CD4-positive, alpha-beta T cell (primary cell): ENCODE measurements at regions of chr5 and their contacts with region 1.

Region 1: DNA sequence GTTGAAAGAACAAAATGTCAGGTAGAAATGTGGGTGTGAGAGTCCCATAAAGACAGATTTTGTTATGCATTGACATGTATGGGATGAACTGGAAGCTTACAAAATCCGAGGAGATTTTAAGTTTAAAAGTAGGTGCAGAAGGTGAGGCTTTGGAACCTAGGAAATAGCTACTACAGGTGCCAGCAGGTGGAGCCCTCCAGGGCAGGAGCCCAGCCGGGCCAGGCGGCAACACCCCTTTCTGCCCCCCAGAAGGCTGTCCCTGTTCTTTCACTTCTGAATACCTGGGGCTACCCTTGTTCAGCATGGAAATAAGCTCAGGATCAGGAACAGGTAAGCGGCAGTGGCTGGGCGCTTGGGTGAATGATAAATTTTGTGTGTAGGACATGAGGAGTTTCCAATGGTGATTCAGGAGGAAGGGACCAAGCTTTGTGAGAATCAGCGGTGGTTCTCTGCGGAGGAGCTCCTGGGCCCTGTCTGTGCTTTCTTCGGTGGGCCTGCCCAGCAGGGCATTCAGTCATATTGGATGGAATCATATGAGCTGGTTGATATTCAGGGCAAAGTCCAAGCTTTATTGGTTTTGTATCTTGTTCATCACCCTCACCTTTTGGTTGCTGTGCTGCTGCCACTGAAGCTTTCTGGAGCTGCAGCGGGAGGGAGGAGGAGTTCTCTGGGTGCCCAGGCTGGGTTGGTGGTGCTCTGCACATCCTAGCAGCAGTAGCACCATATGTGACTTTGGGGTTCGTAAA is 12.3 kb downstream of the PCBD2 start:
- DNase-seq: peak in 1 of 14 experiments; percentile 9
- ATAC-seq: no peak
- H3K4me3 ChIP-seq: no peak overlapping the region
- H3K4me3 Mint-ChIP-seq: no peak overlapping the region
- H3K27ac ChIP-seq: no peak overlapping the region
- H3K27ac Mint-ChIP-seq: no peak overlapping the region
- H3K4me1 ChIP-seq: no peaks in the 10 kb centered on the region
- H3K4me1 Mint-ChIP-seq: peaks cover 12% of the 10 kb centered on the region
- H3K27me3 ChIP-seq: no peaks in the 10 kb centered on the region
- H3K27me3 Mint-ChIP-seq: no peaks in the 10 kb centered on the region
- CTCF ChIP-seq: no peak

Region 2: DNA sequence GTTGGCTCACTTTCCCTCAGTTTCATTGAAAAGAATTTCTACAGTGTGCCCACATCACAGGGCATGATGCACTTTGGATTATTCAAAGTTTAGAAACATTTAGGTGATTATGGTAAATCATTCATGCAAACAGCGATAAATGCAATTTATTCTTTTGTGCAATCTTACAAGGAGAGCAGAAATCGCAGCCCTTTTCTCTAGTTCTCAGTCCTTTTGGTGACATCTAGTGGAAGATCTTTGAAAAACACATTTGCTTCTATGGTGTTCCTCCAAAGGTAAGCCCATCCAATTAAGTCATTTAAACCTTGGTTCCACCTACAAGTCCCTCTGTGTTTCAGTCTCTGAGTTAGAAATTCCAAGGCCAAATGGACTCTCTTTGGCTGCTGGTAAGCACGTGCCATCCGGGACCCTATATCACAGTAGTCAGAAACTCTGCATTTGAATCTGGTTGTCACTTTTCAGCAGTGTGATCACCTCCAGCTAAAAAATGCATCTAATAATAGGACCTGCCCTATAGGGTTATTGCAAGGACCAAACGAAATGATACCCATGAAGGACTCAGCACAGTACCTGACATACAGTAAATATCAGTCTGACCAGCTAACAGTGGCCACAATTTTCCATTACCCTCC is 415.4 kb after region 1 on chr5:
- CTCF ChIA-PET with region 1: no interaction called
- POLR2A ChIA-PET with region 1: no interaction called
- intact Hi-C with region 1: loop called in 1 of 2 experiments (anchors 5 kb)
- DNase-seq: peak in 3 of 14 experiments; percentile 33 to 47 (median 37)
- ATAC-seq: peak; percentile 55
- H3K4me3 ChIP-seq: no peak overlapping the region
- H3K4me3 Mint-ChIP-seq: no peak overlapping the region
- H3K27ac ChIP-seq: no peak overlapping the region
- H3K27ac Mint-ChIP-seq: no peak overlapping the region
- H3K4me1 ChIP-seq: no peaks in the 10 kb centered on the region
- H3K4me1 Mint-ChIP-seq: peaks cover 7% of the 10 kb centered on the region
- H3K27me3 ChIP-seq: no peaks in the 10 kb centered on the region
- H3K27me3 Mint-ChIP-seq: no peaks in the 10 kb centered on the region
- CTCF ChIP-seq: peak; percentile 62